Calu3 (cell line): ENCODE measurements at regions of chr7 and their contacts with region 1.

Region 1: DNA sequence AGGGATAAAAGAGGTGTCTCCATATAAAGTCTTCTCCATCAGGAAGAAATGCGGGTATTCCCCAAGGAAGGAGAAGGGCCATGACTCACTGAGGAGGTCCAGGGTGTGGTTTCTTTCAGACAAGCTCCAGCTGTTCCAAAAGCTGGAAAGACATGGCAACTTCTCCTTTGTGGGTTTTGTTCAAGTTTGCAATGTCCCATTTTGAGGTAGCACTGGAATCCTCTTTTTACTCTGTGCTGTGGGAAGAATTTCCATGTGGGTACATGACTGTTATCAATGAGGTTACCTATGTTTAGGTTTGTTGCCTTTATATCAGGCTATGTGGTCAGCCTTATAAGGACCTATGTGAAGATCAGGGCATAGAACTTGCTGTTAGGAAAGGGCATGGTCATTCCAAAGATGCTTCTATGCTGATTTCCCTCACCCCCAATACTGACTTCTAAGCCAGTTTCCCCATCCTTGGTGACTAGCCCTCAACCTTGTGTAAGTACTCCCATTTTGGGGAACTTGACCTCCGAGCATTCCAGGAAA is 697.4 kb downstream of the INHBA start:
- DNase-seq: peak; percentile 68
- H3K4me3 Mint-ChIP-seq: peak overlapping the region; percentile 27
- H3K27ac Mint-ChIP-seq: peak overlapping the region; percentile 96
- H3K4me1 Mint-ChIP-seq: peaks cover 80% of the 10 kb centered on the region
- H3K27me3 Mint-ChIP-seq: no peaks in the 10 kb centered on the region
- CTCF ChIP-seq: no peak

Region 2: DNA sequence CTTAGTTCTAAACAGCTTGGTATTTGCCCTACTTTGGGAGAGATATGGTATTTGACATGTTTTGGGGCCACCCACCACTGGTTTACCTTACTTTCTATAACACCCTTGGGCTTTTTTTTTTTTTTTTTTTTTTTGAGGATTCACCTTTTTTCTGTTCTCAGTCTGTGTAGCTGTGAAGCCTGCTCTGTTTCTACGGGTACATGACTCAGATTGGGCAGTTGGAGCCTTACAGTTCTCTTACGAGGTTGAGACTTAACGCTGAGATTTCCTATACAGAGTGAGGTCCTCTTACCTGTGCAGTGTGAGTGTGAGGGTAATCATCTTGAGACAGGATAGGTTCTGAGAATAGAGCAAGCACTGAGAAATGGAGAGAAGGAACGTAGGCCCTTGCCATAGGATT is 977.9 kb before region 1 on chr7:
- CTCF ChIA-PET with region 1: no interaction called
- intact Hi-C with region 1: no loop called
- DNase-seq: no peak
- H3K4me3 Mint-ChIP-seq: no peak overlapping the region
- H3K27ac Mint-ChIP-seq: no peak overlapping the region
- H3K4me1 Mint-ChIP-seq: peaks cover 10% of the 10 kb centered on the region
- H3K27me3 Mint-ChIP-seq: no peaks in the 10 kb centered on the region
- CTCF ChIP-seq: no peak

Region 3: GRCh38 chr7:40848541-40849221 is 156.8 kb before region 1 on chr7:
- CTCF ChIA-PET with region 1: no interaction called
- intact Hi-C with region 1: loop called (anchors 5 kb)
- DNase-seq: no peak
- H3K4me3 Mint-ChIP-seq: no peak overlapping the region
- H3K27ac Mint-ChIP-seq: no peak overlapping the region
- H3K4me1 Mint-ChIP-seq: peaks cover 8% of the 10 kb centered on the region
- H3K27me3 Mint-ChIP-seq: no peaks in the 10 kb centered on the region
- CTCF ChIP-seq: no peak

Region 4: DNA sequence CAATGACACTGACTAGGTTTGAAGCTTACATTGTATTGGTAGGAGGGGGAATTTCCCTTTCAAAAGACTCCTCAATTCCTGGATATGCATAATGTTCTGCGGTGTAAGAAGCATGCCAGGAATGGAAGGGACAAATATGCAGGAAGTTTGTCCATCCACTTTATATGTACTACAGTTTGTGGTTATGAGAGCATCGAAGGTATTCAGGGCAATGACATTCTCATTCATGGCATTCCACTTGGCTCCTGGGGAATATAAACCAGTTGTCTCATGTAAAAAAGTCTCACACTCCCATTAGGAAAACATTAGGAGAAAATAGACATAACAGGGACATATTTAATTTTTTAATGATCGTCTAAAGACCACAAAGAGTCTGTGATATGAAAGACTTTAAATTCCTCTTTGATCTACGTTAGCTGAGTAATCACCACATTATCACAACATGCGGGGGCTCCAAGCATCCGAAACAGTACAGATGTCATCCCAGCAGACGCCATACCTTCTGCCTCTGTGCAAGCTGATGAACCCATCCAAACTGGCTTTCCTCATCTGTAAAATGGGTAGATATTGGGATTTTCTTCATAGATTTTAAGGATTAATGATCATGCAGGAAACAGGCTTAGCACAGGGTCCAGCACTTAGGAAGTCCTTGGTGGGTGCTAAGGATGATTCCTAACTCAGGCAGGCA is 22.1 kb after region 1 on chr7:
- CTCF ChIA-PET with region 1: interaction called, 4 read pairs
- intact Hi-C with region 1: loop called (anchors 1 kb)
- DNase-seq: peak; percentile 54
- H3K4me3 Mint-ChIP-seq: peak overlapping the region; percentile 2
- H3K27ac Mint-ChIP-seq: peak overlapping the region; percentile 77
- H3K4me1 Mint-ChIP-seq: peaks cover 50% of the 10 kb centered on the region
- H3K27me3 Mint-ChIP-seq: no peaks in the 10 kb centered on the region
- CTCF ChIP-seq: no peak

Region 5: DNA sequence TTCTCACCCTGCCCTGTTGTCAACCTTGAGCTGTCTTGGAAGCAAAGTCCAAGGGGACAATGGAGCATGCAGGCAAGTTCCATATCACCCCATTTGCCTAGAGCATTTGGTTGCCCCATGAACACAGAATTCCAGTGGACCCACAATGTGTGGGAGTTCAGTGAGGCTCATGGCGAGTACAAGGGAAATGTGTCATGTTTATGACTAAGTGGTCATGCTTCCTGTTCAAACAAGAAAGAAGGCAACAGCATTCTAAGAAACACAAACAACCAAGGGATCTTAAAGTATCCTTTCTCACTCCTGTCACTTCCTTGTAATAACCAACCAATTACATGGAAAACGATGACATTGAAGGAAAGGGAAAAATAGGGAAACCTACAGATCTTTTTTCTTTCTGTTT is 184.4 kb after region 1 on chr7:
- CTCF ChIA-PET with region 1: no interaction called
- intact Hi-C with region 1: loop called (anchors 1 kb)
- DNase-seq: peak; percentile 54
- H3K4me3 Mint-ChIP-seq: no peak overlapping the region
- H3K27ac Mint-ChIP-seq: peak overlapping the region; percentile 95
- H3K4me1 Mint-ChIP-seq: peaks cover 49% of the 10 kb centered on the region
- H3K27me3 Mint-ChIP-seq: no peaks in the 10 kb centered on the region
- CTCF ChIP-seq: no peak

Region 6: DNA sequence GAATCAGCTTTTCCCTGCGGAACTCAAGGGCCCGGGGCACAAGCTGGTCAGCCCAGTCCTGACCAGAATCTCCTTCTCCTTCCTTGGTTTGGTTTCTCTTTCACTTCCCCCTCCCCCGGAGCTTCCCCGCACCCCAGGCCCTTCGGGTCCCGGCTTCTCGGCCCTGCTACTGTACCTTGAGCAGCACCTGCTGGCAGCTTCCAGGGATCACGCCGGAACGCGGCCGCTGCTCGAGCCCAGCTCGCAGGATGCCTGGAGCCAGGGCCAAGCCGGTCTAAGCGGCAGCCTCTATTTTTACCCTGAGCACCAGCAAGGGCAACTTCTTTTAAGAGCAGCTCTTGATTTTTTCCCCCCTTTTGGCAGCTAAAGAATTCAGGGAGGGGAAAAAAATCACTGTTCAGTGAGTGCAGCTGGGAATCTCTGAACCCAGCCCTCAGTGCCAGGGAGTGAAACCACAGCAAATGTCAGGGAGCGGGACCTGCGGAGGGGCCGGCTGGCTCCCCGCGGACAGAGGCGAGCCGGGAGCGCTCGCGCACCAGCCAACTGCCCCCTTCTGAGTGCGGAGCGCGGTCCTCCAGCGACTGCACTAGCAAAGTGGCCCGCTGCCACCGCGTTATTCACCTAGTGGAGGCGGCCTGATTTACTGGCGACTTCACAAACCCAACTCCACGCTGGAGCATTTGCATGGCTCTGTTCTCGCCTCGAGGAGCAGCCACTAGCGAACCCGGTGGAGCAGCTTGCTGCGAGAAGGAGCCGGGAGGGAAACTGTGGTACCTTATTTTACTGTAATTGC is 699.9 kb after region 1 on chr7:
- CTCF ChIA-PET with region 1: interaction called, 10 read pairs
- intact Hi-C with region 1: loop called (anchors 1 kb)
- DNase-seq: peak; percentile 98
- H3K4me3 Mint-ChIP-seq: peak overlapping the region; percentile 75
- H3K27ac Mint-ChIP-seq: peak overlapping the region; percentile 52
- H3K4me1 Mint-ChIP-seq: peaks cover 69% of the 10 kb centered on the region
- H3K27me3 Mint-ChIP-seq: no peaks in the 10 kb centered on the region
- CTCF ChIP-seq: peak; percentile 97